Right cardiac atrium (tissue), 5 donors: ENCODE measurements at regions of chr4 and their contacts with region 1.

Region 1: DNA sequence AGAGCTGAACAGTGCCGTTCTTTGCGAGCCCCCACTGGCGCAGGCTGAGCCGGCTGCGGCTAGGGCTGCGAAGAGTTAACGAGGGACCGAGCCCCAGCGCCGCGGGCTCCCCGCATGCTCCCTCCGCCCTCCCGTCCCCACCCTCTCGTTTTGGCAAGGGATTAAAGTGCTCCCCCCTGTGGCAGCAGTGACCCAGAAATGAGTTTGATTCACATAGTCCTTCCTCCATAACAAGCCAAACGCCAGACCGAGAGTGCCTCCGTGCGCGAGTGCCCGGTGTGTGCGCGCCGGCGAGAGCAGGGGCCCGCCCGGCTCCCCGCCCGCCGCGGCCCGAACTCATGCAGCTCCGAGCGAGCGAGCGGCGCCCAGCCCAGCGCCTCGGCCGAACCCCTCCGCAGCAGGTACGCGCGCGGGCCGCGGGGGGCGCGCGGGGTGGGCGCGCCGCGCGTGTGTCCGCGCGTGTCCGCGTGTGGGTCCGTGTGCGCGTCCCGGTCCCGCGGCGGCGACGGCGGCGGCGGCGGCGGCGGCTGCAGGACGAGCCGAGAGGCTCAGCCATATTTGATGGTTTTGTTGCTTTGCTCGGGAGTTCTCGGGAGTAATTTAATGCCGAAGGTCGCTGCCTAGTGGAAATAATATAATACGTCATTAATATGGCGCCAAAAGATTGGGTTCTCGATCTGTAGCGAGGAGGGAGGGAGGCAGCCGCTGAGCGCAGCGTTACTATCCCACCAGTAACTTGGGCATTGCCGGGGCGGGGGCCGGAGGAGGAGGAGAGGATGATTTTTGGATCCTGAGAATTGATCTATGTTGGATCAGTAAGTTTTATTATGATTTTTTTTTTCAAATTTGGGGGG is at the start of gene JADE1:
- DNase-seq: peak; percentile 90 to 96 (median 94)
- ATAC-seq: peak; percentile 79 to 87
- H3K4me3 ChIP-seq: peak within 1 kb of the TSS; percentile 93
- H3K27ac ChIP-seq: peak within 1 kb of the TSS; percentile 99
- H3K4me1 ChIP-seq: no peaks in the 10 kb centered on the region
- H3K27me3 ChIP-seq: no peaks in the 10 kb centered on the region
- total RNA-seq, gene JADE1: 24.0 to 41.0 (median 26.7) TPM

Region 2: DNA sequence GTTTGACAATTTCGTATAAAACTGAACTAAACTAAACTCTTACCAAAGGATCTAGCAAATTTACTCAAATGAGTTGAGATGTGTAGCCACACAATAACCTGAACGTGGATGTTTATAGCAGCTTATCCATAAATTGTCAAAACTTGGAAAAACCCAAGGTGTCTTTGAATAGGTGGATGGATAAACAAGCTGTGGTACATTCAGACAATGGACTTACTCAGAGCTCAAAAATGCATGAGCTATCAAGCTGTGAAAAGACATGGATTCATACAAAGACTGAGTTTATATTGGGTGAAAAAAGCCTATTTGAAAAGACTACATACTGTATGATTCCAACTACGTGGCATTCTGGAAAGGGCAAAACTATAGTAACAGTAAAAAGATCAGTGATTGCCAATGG is 679.1 kb before region 1 on chr4:
- intact Hi-C with region 1: no loop called
- DNase-seq: no peak
- ATAC-seq: no peak
- H3K4me3 ChIP-seq: no peak overlapping the region
- H3K27ac ChIP-seq: no peak overlapping the region
- H3K4me1 ChIP-seq: no peaks in the 10 kb centered on the region
- H3K27me3 ChIP-seq: no peaks in the 10 kb centered on the region

Region 3: GRCh38 chr4:128454281-128455075 is 355.2 kb before region 1 on chr4:
- intact Hi-C with region 1: loop called in 1 of 4 experiments (anchors 10 kb)
- DNase-seq: peak; percentile 81 to 89 (median 83)
- ATAC-seq: peak; percentile 90 to 95
- H3K4me3 ChIP-seq: no peak overlapping the region
- H3K27ac ChIP-seq: no peak overlapping the region
- H3K4me1 ChIP-seq: peaks cover 3% of the 10 kb centered on the region
- H3K27me3 ChIP-seq: no peaks in the 10 kb centered on the region

Region 4: GRCh38 chr4:128565565-128566186 is 244.0 kb before region 1 on chr4:
- intact Hi-C with region 1: loop called in 2 of 4 experiments (anchors 5 to 10 kb)
- DNase-seq: peak; percentile 31 to 76 (median 64)
- ATAC-seq: peak; percentile 69 to 85
- H3K4me3 ChIP-seq: no peak overlapping the region
- H3K27ac ChIP-seq: no peak overlapping the region
- H3K4me1 ChIP-seq: peaks cover 5% of the 10 kb centered on the region
- H3K27me3 ChIP-seq: no peaks in the 10 kb centered on the region

Region 5: DNA sequence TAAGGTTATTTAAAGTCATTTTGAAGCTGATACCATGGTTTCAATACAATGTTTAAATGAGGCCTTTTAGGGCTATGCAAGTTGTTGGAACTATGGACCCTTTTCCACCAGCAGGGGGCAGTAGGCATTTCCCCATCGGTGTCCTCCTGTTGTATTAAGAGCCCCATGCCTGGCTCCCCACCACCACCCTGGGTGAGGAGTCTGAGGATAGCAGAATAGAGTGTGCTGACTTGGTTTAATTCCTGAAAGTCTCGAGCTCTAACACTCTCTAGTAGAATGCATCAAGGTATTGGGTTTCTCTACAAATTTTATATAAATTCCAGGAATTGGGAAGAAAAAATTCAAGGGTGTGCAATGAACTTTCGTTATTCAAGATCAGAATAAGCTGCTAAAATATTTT is 235.0 kb before region 1 on chr4:
- intact Hi-C with region 1: loop called in 2 of 4 experiments (anchors 5 to 10 kb)
- DNase-seq: peak; percentile 62 to 83 (median 76)
- ATAC-seq: peak; percentile 30 to 44
- H3K4me3 ChIP-seq: no peak overlapping the region
- H3K27ac ChIP-seq: no peak overlapping the region
- H3K4me1 ChIP-seq: peaks cover 10% of the 10 kb centered on the region
- H3K27me3 ChIP-seq: no peaks in the 10 kb centered on the region

Region 6: DNA sequence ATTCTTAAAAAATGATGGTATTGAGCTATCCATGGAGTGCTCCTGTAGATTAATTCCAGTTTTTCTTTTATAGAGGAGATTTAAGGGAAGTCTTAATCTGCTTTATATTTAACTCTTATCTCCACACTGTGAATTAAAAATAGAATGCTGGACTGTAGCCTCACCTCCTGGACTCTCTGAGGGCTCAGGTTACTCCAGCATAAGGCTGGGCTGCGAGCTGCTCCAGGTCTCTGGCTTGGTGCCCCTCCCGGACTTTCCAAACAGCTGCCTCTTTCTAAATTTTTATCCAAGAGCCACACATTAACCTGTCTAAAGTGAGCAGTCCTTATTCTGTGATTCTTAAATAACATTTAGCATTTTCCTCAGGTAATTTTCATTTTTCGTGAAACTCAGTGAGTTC is 218.9 kb before region 1 on chr4:
- intact Hi-C with region 1: loop called in 1 of 4 experiments (anchors 10 kb)
- DNase-seq: no peak
- ATAC-seq: peak; percentile 64 to 81
- H3K4me3 ChIP-seq: no peak overlapping the region
- H3K27ac ChIP-seq: no peak overlapping the region
- H3K4me1 ChIP-seq: peaks cover 2% of the 10 kb centered on the region
- H3K27me3 ChIP-seq: no peaks in the 10 kb centered on the region

Region 7: GRCh38 chr4:128653517-128654444 is 155.9 kb before region 1 on chr4:
- intact Hi-C with region 1: no loop called
- DNase-seq: peak; percentile 57 to 81 (median 67)
- ATAC-seq: peak; percentile 93 to 95
- H3K4me3 ChIP-seq: peak overlapping the region; percentile 3
- H3K27ac ChIP-seq: peak overlapping the region; percentile 55
- H3K4me1 ChIP-seq: no peaks in the 10 kb centered on the region
- H3K27me3 ChIP-seq: no peaks in the 10 kb centered on the region

Region 8: DNA sequence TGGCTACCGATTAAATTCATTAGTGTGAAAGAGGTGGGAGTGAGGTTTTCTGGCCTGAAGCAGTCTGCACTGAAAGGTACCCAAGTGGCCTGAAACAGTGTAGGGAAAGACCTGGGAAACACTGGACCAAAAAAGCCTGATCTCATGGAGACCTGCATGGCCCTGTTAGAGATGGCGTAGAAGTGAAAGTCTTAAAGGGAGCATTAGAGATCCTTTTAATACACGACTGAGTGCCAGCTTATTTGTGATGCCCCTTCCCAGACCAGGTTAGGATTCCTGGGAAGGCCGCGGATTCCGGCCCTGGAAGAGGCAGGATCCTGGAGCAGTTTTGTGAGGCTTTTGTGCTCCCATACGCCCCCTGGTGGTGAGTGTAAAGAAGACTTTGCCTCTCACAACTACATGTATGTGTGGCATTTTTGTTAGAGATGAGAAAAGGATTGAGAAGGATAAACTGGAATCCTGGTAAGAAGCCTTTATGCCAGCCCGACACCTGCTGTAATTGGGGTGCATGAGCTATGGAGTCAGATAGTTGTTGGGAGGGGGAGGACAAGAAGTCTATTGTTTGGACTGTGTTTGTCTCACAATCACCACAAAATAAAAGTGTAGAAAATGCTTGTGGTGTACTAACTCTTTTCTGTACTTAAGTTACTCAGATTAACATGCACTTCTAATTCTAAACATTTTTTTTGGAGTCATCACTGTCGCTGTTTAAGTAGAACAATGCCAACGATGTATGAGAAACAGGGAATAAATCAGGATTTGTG is 53.8 kb after region 1 on chr4:
- intact Hi-C with region 1: loop called in 3 of 4 experiments (anchors 2 to 10 kb)
- DNase-seq: peak; percentile 80 to 87 (median 83)
- ATAC-seq: peak; percentile 55 to 83
- H3K4me3 ChIP-seq: no peak overlapping the region
- H3K27ac ChIP-seq: no peak overlapping the region
- H3K4me1 ChIP-seq: peaks cover 3% of the 10 kb centered on the region
- H3K27me3 ChIP-seq: no peaks in the 10 kb centered on the region